T-cell (primary cell): ENCODE measurements at regions of chr20 and their contacts with region 1.

Region 1: GRCh38 chr20:36754656-36755222 is 8.8 kb upstream of the NDRG3 start:
- DNase-seq: peak in 25 of 35 experiments; percentile 9 to 73 (median 28)
- ATAC-seq: peak; percentile 71 to 82 (median 77)
- H3K4me3 ChIP-seq: no peak overlapping the region
- H3K4me3 Mint-ChIP-seq: no peak overlapping the region
- H3K27ac ChIP-seq: no peak overlapping the region
- H3K27ac Mint-ChIP-seq: peak overlapping the region in 1 of 2 donors; percentile 52
- H3K4me1 ChIP-seq: no peaks in the 10 kb centered on the region
- H3K4me1 Mint-ChIP-seq: peaks cover 0 to 6% (median 0%) of the 10 kb centered on the region in 3 donors
- H3K27me3 ChIP-seq: no peaks in the 10 kb centered on the region
- H3K27me3 Mint-ChIP-seq: no peaks in the 10 kb centered on the region

Region 2: GRCh38 chr20:36506253-36506652 is 248.5 kb before region 1 on chr20:
- CTCF ChIA-PET with region 1: interaction called in 1 of 2 experiments, 10 read pairs
- POLR2A ChIA-PET with region 1: interaction called in 1 of 2 experiments, 5 read pairs
- DNase-seq: peak in 5 of 35 experiments; percentile 5 to 49 (median 10)
- ATAC-seq: peak; percentile 43 to 86 (median 50)
- H3K4me3 ChIP-seq: no peak overlapping the region
- H3K4me3 Mint-ChIP-seq: no peak overlapping the region
- H3K27ac ChIP-seq: no peak overlapping the region
- H3K27ac Mint-ChIP-seq: no peak overlapping the region
- H3K4me1 ChIP-seq: no peaks in the 10 kb centered on the region
- H3K4me1 Mint-ChIP-seq: peaks cover 8 to 16% (median 15%) of the 10 kb centered on the region in 3 donors
- H3K27me3 ChIP-seq: no peaks in the 10 kb centered on the region
- H3K27me3 Mint-ChIP-seq: no peaks in the 10 kb centered on the region

Region 3: GRCh38 chr20:36613974-36614373 is 140.8 kb before region 1 on chr20:
- CTCF ChIA-PET with region 1: interaction called in 1 of 2 experiments, 16 read pairs
- POLR2A ChIA-PET with region 1: interaction called in 1 of 2 experiments, 6 read pairs
- DNase-seq: no peak
- ATAC-seq: no peak
- H3K4me3 ChIP-seq: no peak overlapping the region
- H3K4me3 Mint-ChIP-seq: no peak overlapping the region
- H3K27ac ChIP-seq: no peak overlapping the region
- H3K27ac Mint-ChIP-seq: peak overlapping the region in 1 of 2 donors; percentile 69
- H3K4me1 ChIP-seq: peaks cover 0 to 9% of the 10 kb centered on the region in 2 experiments
- H3K4me1 Mint-ChIP-seq: peaks cover 11 to 32% (median 12%) of the 10 kb centered on the region in 3 donors
- H3K27me3 ChIP-seq: no peaks in the 10 kb centered on the region
- H3K27me3 Mint-ChIP-seq: no peaks in the 10 kb centered on the region

Region 4: DNA sequence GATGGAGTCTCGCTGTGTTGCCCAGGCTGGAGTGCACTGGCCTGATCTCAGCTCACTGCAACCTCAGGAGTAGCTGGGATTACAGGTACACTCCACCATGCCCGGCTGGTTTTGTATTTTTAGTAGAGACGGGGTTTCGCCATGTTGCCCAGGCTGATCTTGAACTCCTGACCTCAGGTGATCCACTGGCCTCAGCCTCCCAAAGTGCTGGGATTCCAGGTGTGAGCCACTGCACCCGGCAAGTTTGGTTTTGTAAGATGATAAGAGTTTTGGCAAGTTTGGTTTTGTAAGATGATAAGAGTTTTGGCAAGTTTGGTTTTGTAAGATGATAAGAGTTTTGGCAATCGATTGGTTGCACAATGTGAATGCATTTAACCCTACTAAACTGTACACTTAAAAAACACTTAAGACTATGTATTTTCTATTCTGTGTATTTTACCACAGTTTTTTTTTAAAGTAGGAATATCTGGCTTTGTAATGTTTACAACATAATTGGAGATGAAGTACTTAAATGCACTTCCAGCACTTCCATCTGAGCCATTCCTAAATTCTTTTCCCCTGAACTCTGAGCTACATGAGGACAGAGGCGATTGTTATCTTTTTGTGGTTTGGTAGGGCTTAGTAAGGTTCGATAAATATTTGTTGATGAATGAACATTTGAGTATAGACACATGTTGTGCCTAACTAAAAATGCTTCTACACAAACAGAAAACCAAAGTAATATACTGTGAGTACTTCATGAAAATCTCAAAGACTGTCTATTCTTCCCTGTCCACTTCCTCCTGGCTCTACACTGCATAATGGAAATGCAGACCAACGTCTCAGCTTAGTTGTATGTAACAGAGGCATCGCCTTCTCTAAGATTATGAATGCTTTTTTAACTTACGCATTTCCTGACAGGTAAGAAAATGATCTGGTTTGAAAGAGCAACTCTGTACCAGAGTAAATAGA is 178.0 kb after region 1 on chr20:
- CTCF ChIA-PET with region 1: no interaction called
- POLR2A ChIA-PET with region 1: no interaction called
- DNase-seq: no peak
- ATAC-seq: no peak
- H3K4me3 ChIP-seq: no peak overlapping the region
- H3K4me3 Mint-ChIP-seq: peak overlapping the region in 1 of 3 donors; percentile 10
- H3K27ac ChIP-seq: peak overlapping the region; percentile 31
- H3K27ac Mint-ChIP-seq: peak overlapping the region; percentile 83 to 89
- H3K4me1 ChIP-seq: peaks cover 13 to 62% of the 10 kb centered on the region in 2 experiments
- H3K4me1 Mint-ChIP-seq: peaks cover 56 to 79% (median 66%) of the 10 kb centered on the region in 3 donors
- H3K27me3 ChIP-seq: no peaks in the 10 kb centered on the region
- H3K27me3 Mint-ChIP-seq: no peaks in the 10 kb centered on the region

Region 5: GRCh38 chr20:36969478-36970186 is 214.9 kb after region 1 on chr20:
- CTCF ChIA-PET with region 1: no interaction called
- POLR2A ChIA-PET with region 1: no interaction called
- DNase-seq: peak in 18 of 35 experiments; percentile 12 to 65 (median 28)
- ATAC-seq: peak; percentile 74 to 90 (median 82)
- H3K4me3 ChIP-seq: peak overlapping the region in 1 of 2 donors; percentile 50
- H3K4me3 Mint-ChIP-seq: peak overlapping the region; percentile 48 to 83 (median 55)
- H3K27ac ChIP-seq: peak overlapping the region; percentile 80
- H3K27ac Mint-ChIP-seq: peak overlapping the region; percentile 97 to 98
- H3K4me1 ChIP-seq: peaks cover 47 to 77% of the 10 kb centered on the region in 2 experiments
- H3K4me1 Mint-ChIP-seq: peaks cover 61 to 77% (median 65%) of the 10 kb centered on the region in 3 donors
- H3K27me3 ChIP-seq: no peaks in the 10 kb centered on the region
- H3K27me3 Mint-ChIP-seq: no peaks in the 10 kb centered on the region

Region 6: GRCh38 chr20:37102571-37102970 is 347.8 kb after region 1 on chr20:
- CTCF ChIA-PET with region 1: no interaction called
- POLR2A ChIA-PET with region 1: no interaction called
- DNase-seq: no peak
- ATAC-seq: no peak
- H3K4me3 ChIP-seq: no peak overlapping the region
- H3K4me3 Mint-ChIP-seq: no peak overlapping the region
- H3K27ac ChIP-seq: no peak overlapping the region
- H3K27ac Mint-ChIP-seq: no peak overlapping the region
- H3K4me1 ChIP-seq: no peaks in the 10 kb centered on the region
- H3K4me1 Mint-ChIP-seq: no peaks in the 10 kb centered on the region
- H3K27me3 ChIP-seq: no peaks in the 10 kb centered on the region
- H3K27me3 Mint-ChIP-seq: no peaks in the 10 kb centered on the region